Breast epithelium (tissue), 4 donors: ENCODE measurements at regions of chr22 and their contacts with region 1.

Region 1: DNA sequence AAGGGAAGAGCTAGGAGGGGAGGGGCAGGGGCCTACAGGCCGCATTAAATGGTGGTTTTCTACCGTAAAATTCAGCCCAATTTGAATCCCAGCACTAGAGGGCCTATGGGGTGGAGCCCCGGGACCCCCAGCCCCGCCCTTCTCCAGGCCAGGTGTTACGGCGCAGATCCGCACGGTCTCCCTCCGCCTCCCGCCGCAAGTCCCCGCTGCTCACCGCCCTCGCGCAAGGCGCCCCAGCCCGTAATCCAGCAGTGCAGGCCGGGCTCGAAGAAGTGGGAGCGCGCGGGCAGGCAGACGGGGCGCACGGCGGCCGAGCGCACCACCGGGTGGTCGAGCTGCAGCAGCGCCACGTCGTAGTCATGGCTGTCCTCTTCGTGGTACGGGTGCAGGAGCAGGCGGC is 17.3 kb downstream of the KCTD17 start:
- DNase-seq: no peak
- H3K4me3 ChIP-seq: no peak overlapping the region
- H3K27ac ChIP-seq: no peak overlapping the region
- H3K4me1 ChIP-seq: no peaks in the 10 kb centered on the region
- H3K27me3 ChIP-seq: peaks cover 2 to 43% of the 10 kb centered on the region in 2 donors
- CTCF ChIP-seq: no peak
- POLR2A ChIP-seq: no peak

Region 2: DNA sequence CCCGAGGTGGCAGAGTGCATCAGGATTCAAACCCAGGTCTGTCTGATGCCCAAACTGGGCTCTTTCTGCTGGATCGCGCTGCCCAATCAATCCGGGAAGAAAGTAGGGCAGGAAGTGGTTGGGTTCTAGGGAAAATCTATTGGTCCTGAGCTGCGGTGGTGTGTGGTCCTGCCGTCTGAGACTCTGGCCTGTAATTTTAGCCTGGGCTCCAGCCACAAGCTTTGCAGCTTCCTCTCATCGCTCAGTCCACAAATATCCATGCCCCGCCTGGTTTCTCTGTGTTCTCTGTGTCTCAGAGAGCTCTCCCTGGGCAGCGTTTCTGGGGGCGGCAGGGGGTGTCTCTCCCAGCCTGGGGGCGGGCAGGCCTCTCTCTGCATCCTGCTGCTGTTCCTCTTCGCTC is 384.0 kb before region 1 on chr22:
- intact Hi-C with region 1: no loop called
- DNase-seq: no peak
- H3K4me3 ChIP-seq: no peak overlapping the region
- H3K27ac ChIP-seq: no peak overlapping the region
- H3K4me1 ChIP-seq: no peaks in the 10 kb centered on the region
- H3K27me3 ChIP-seq: peaks cover 0 to 36% of the 10 kb centered on the region in 2 donors
- CTCF ChIP-seq: no peak
- POLR2A ChIP-seq: no peak

Region 3: DNA sequence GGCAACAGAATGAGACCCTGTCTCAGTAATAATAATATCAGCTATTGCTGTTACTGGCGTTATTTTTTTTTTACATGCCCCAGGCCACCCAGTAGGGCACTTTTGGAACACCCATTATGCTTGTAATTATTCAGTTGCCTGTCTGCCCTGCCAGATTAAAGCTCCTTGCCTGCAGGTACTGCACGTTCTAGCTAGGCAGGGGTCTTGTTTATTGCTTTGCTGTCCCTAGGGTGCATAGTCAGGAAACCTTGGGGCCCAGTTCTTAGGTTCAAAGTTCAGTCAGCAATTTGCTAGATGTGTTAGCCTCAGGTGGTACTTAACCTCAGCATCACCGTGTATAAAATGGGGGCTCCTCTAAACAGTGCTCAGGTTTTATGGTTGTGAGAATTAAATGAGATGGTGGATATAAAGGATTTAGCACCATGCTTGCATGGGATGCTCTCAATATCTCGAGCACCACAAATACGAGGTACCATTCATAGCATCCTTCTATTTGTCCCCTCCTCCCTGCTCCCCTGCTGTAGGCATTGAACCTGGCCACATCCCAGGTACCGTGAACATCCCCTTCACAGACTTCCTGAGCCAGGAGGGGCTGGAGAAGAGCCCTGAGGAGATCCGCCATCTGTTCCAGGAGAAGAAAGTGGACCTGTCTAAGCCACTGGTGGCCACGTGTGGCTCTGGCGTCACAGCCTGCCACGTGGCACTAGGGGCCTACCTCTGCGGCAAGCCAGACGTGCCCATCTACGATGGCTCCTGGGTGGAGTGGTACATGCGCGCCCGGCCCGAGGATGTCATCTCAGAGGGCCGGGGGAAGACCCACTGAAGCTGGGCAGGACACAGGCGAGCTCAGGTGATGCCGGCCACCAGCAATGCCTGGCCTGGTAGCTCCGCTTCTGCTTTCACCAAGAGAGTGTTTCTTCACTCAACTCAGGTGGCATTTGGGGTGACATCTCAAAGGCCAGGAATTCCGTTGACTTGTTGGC is 39.9 kb before region 1 on chr22:
- intact Hi-C with region 1: loop called (anchors 1 kb)
- DNase-seq: no peak
- H3K4me3 ChIP-seq: no peak overlapping the region
- H3K27ac ChIP-seq: no peak overlapping the region
- H3K4me1 ChIP-seq: peaks cover 0 to 8% of the 10 kb centered on the region in 2 donors
- H3K27me3 ChIP-seq: no peaks in the 10 kb centered on the region
- CTCF ChIP-seq: no peak
- POLR2A ChIP-seq: no peak

Region 4: DNA sequence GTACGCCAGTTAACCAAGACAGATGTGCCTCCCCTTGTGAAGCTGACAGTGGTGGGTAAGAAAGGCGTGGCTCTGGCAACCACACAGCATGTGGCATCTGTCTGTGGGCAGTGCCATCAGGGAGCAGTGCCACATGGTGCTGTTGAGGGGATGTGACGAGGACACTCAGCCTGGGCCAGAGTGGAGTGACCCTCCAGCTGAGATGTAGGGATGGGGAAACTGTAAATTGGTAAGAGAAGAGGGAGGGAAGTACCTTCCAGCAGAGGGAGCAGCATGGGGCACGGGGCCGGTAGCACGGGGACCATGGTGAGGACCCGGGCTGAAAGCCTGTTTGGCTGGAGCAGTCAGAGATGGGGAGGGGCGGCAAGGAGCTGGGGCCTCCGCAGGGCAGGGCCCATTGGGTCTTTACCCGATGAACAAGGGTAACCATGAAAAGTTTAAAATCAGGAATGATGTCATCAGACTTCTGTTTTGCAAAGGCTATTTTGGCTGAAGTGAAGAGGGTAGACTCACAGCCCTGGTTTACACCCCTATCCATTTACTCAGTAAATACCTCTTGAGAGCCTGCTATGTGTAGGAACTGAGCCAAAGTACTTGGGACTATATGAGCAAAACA is 30.2 kb after region 1 on chr22:
- intact Hi-C with region 1: loop called (anchors 2 kb)
- DNase-seq: no peak
- H3K4me3 ChIP-seq: no peak overlapping the region
- H3K27ac ChIP-seq: no peak overlapping the region
- H3K4me1 ChIP-seq: no peaks in the 10 kb centered on the region
- H3K27me3 ChIP-seq: peaks cover 0 to 23% of the 10 kb centered on the region in 2 donors
- CTCF ChIP-seq: no peak
- POLR2A ChIP-seq: no peak